ENCODE measurements at regions of chr3 and their contacts with region 1.

Region 1: GRCh38 chr3:54988838-54989630 is 61.2 kb upstream of the LRTM1 start:
- DNase-seq: no peak
- ATAC-seq: no peak
- H3K4me3 ChIP-seq: no peak overlapping the region
- H3K27ac ChIP-seq: no peak overlapping the region
- H3K4me1 ChIP-seq: no peaks in the 10 kb centered on the region
- H3K27me3 ChIP-seq: no peaks in the 10 kb centered on the region; a peak in 1 of 5 replicates
- CTCF ChIP-seq: no peak
- EP300 ChIP-seq: no peak
- POLR2A ChIP-seq: no peak
- RAD21 ChIP-seq: no peak

Region 2: DNA sequence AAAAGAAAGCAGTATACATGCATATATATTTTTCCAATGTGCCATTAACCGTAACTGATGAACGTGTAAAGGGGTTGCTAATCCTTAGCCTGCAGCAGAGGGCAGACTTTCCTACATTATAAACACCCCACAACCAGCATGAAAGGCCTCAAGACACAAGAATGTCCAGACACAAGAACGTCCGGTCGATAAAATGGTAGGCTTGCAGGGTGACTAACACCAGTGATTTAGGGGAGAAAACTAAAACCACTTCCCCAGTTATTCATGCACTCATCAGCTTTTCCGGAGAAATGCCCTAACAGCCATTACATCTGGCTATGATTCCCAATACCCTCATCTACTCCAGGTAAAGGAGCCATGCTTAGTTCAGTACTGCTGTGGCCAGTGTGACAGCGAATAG is 118.6 kb before region 1 on chr3:
- CTCF ChIA-PET with region 1: no interaction called
- POLR2A ChIA-PET with region 1: no interaction called
- in situ Hi-C with region 1: no loop called
- intact Hi-C with region 1: loop called (anchors 10 kb)
- DNase-seq: peak; percentile 7 to 22 (median 16)
- ATAC-seq: peak; percentile 59; the same call in 2 of the 3 replicates
- H3K4me3 ChIP-seq: no peak overlapping the region
- H3K27ac ChIP-seq: no peak overlapping the region
- H3K4me1 ChIP-seq: no peaks in the 10 kb centered on the region
- H3K27me3 ChIP-seq: 0 out of 5 replicates have a peak, but pooled peaks cover 0 to 6% of the 10 kb centered on the region in 2 experiments
- CTCF ChIP-seq: peak; percentile 2 to 53 (median 38); a peak in 3 of 6 replicates
- EP300 ChIP-seq: no peak
- POLR2A ChIP-seq: no peak
- RAD21 ChIP-seq: peak; percentile 44 to 46

Region 3: GRCh38 chr3:54891548-54892120 is 97.4 kb before region 1 on chr3:
- CTCF ChIA-PET with region 1: no interaction called
- POLR2A ChIA-PET with region 1: no interaction called
- in situ Hi-C with region 1: no loop called
- intact Hi-C with region 1: no loop called
- DNase-seq: peak; percentile 24 to 58 (median 34)
- ATAC-seq: peak; percentile 81
- H3K4me3 ChIP-seq: no peak overlapping the region
- H3K27ac ChIP-seq: no peak overlapping the region
- H3K4me1 ChIP-seq: no peaks in the 10 kb centered on the region; a peak in 3 of 5 replicates
- H3K27me3 ChIP-seq: no peaks in the 10 kb centered on the region
- CTCF ChIP-seq: peak; percentile 16 to 47 (median 37); a peak in 4 of 6 replicates
- EP300 ChIP-seq: no peak
- POLR2A ChIP-seq: no peak
- RAD21 ChIP-seq: no peak

Measured in K562 (cell line).